ENCODE measurements at regions of chr10 and their contacts with region 1.

Region 1: DNA sequence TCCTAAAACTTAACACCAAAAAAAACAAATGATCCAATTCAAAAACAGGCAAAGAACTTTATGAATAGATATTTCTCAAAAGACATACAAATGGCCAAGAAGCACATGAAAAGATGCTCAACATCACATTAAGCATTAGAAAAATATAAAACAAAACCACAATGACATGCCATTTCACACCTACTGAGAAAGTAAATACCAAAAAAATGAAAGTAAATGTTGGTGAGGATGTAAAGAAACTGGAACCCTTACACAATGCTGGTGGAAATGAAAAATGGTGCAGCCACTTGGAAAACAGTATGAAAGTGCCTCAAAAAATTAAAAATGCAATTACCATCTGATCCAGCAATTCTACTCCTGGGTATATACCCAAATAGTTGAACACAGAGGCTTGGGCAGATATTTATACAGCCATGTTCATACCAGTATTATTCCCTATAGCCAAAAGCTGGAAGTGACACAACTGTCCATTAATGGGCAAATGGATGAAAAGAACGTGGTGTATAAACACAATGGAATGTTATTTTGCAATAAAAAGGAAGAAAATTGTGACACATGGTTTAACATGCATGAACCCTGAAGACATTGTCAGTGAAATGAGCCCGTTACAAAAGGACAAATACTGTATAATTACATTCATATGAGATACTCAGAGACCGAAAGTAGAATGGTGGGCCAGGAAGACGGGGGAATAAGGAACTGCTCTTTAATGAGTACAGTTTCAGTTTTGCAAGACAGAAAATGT is 89.0 kb downstream of the JMJD1C start:
- DNase-seq: no peak
- ATAC-seq: no peak
- H3K4me3 ChIP-seq: peak overlapping the region in 1 of 12 donors; percentile 16
- H3K27ac ChIP-seq: peak overlapping the region in 2 of 12 donors; percentile 19 to 44
- H3K4me1 ChIP-seq: peaks cover 0 to 41% (median 3%) of the 10 kb centered on the region in 12 donors
- H3K27me3 ChIP-seq: no peaks in the 10 kb centered on the region
- CTCF ChIP-seq: no peak
- POLR2A ChIP-seq: no peak

Region 2: DNA sequence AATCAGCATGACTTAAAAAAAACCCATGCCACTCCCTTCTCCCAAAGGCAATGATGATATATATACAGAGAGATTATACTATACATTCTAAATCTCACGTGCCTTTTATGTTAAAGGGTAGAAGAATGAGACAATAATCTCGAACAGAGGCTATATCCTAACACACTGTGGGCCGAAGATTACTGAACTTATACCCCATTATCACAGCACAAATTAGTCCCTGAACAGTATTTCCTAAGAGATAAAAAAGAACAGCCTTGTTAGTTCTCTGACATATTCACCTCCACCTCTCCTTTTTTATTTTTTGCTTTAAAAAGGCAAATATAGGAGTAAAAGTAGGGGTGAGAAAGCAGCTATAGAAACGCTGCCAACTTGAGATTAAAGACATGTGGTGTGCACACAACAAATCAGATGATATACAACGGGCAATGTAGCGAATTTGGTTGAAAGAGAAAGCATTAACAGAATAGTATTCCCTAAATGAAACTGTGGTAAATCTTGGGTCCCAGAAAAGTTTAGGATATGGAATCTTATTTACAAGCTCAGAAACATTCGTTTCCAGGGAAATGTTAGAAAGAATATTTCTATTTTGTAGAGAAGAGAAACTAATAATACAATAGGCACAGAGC is 19.5 kb after region 1 on chr10:
- intact Hi-C with region 1: no loop called
- DNase-seq: no peak
- ATAC-seq: no peak
- H3K4me3 ChIP-seq: peak overlapping the region in 1 of 12 donors; percentile 7
- H3K27ac ChIP-seq: no peak overlapping the region
- H3K4me1 ChIP-seq: peaks cover 0 to 24% (median 0%) of the 10 kb centered on the region in 12 donors
- H3K27me3 ChIP-seq: no peaks in the 10 kb centered on the region
- CTCF ChIP-seq: no peak
- POLR2A ChIP-seq: no peak

Region 3: GRCh38 chr10:63441404-63441803 is 64.7 kb after region 1 on chr10:
- intact Hi-C with region 1: loop called in 1 of 10 experiments (anchors 10 kb)
- DNase-seq: no peak
- ATAC-seq: no peak
- H3K4me3 ChIP-seq: no peak overlapping the region
- H3K27ac ChIP-seq: no peak overlapping the region
- H3K4me1 ChIP-seq: peaks cover 0 to 66% (median 42%) of the 10 kb centered on the region in 12 donors
- H3K27me3 ChIP-seq: no peaks in the 10 kb centered on the region
- CTCF ChIP-seq: no peak
- POLR2A ChIP-seq: no peak